Activated CD4-positive, alpha-beta T cell treated with anti-CD3 and anti-CD28 coated beads for 36 hours (primary cell): ENCODE measurements at regions of chr10 and their contacts with region 1.

Region 1: GRCh38 chr10:11225935-11226334 is 208.3 kb downstream of the CELF2 start:
- DNase-seq: peak; percentile 85
- ATAC-seq: peak; percentile 80
- H3K4me3 Mint-ChIP-seq: peak overlapping the region; percentile 47
- H3K27ac Mint-ChIP-seq: peak overlapping the region; percentile 93
- H3K4me1 Mint-ChIP-seq: peaks cover 96% of the 10 kb centered on the region
- H3K27me3 Mint-ChIP-seq: no peaks in the 10 kb centered on the region

Region 2: DNA sequence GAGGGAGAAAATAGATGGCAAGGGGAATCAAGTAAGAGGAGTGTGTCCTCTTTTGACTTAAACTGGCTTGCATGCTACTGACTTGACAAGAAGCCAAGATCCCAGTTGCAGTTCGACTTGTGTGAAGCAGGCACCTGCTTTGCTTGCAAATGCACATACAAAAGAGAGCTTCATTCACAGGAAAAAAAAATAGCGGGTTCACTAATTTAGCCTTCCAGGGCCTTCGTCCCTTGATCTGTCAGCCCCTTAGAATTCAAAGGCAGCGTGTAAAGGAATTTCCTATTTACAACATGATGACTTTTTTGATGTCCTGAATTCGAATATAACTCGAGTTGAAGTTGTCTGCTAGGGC is 16.1 kb before region 1 on chr10:
- CTCF ChIA-PET with region 1: interaction called, 15 read pairs
- POLR2A ChIA-PET with region 1: interaction called, 12 read pairs
- intact Hi-C with region 1: no loop called
- DNase-seq: no peak
- ATAC-seq: peak; percentile 2
- H3K4me3 Mint-ChIP-seq: peak overlapping the region; percentile 63
- H3K27ac Mint-ChIP-seq: peak overlapping the region; percentile 97
- H3K4me1 Mint-ChIP-seq: peaks cover 99% of the 10 kb centered on the region
- H3K27me3 Mint-ChIP-seq: no peaks in the 10 kb centered on the region

Region 3: DNA sequence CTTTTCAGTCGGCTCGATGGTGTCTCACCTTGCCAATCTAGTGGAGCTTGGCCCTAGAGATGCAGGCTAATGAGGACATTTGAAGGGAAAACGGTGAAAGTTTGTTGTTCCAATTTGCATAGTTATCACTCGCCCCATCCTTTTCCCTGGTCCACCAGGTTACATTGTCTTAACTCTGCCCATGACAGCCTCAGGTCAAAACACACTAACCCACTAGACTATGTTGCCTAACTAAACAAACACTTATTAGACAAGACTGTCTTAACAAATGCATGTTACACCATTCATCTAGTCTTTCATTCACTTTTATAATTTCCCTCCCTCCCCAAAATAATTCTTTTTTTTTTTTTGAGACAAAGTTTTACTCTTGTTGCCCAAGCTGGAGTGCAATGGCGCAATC is 344.8 kb after region 1 on chr10:
- CTCF ChIA-PET with region 1: no interaction called
- POLR2A ChIA-PET with region 1: no interaction called
- intact Hi-C with region 1: no loop called
- DNase-seq: no peak
- ATAC-seq: no peak
- H3K4me3 Mint-ChIP-seq: no peak overlapping the region
- H3K27ac Mint-ChIP-seq: no peak overlapping the region
- H3K4me1 Mint-ChIP-seq: peaks cover 17% of the 10 kb centered on the region
- H3K27me3 Mint-ChIP-seq: peaks cover 7% of the 10 kb centered on the region